Naive thymus-derived CD4-positive, alpha-beta T cell (primary cell): ENCODE measurements at regions of chr3 and their contacts with region 1.

Region 1: GRCh38 chr3:149480325-149481017 is 6.0 kb downstream of the TM4SF4 start:
- DNase-seq: peak in 1 of 9 donors; percentile 28
- ATAC-seq: peak; percentile 73
- H3K4me3 ChIP-seq: no peak overlapping the region
- H3K4me3 Mint-ChIP-seq: no peak overlapping the region
- H3K27ac ChIP-seq: no peak overlapping the region
- H3K27ac Mint-ChIP-seq: no peak overlapping the region
- H3K4me1 ChIP-seq: no peaks in the 10 kb centered on the region
- H3K4me1 Mint-ChIP-seq: no peaks in the 10 kb centered on the region
- H3K27me3 ChIP-seq: no peaks in the 10 kb centered on the region
- H3K27me3 Mint-ChIP-seq: peaks cover 0 to 23% (median 8%) of the 10 kb centered on the region in 5 donors

Region 2: GRCh38 chr3:149352556-149352955 is 127.9 kb before region 1 on chr3:
- CTCF ChIA-PET with region 1: no interaction called
- POLR2A ChIA-PET with region 1: no interaction called
- intact Hi-C with region 1: loop called in 1 of 2 experiments (anchors 10 kb)
- DNase-seq: peak in 3 of 9 donors; percentile 3 to 28 (median 4)
- ATAC-seq: peak; percentile 83
- H3K4me3 ChIP-seq: no peak overlapping the region
- H3K4me3 Mint-ChIP-seq: no peak overlapping the region
- H3K27ac ChIP-seq: no peak overlapping the region
- H3K27ac Mint-ChIP-seq: no peak overlapping the region
- H3K4me1 ChIP-seq: no peaks in the 10 kb centered on the region
- H3K4me1 Mint-ChIP-seq: no peaks in the 10 kb centered on the region
- H3K27me3 ChIP-seq: no peaks in the 10 kb centered on the region
- H3K27me3 Mint-ChIP-seq: peaks cover 22 to 33% (median 29%) of the 10 kb centered on the region in 5 donors